K562 (cell line): ENCODE measurements at regions of chr20 and their contacts with region 1.

Region 1: GRCh38 chr20:34190679-34191090 is 50.5 kb upstream of the ASIP start:
- DNase-seq: peak; percentile 61 to 81 (median 72)
- ATAC-seq: peak; percentile 96
- H3K4me3 ChIP-seq: no peak overlapping the region
- H3K27ac ChIP-seq: no peak overlapping the region
- H3K4me1 ChIP-seq: peaks cover 5 to 12% of the 10 kb centered on the region in 2 experiments; a peak in 3 of 5 replicates
- H3K27me3 ChIP-seq: peaks cover 4 to 6% of the 10 kb centered on the region in 2 experiments; a peak in 1 of 5 replicates
- CTCF ChIP-seq: peak; percentile 79 to 95 (median 89)
- EP300 ChIP-seq: no peak
- POLR2A ChIP-seq: no peak
- RAD21 ChIP-seq: peak; percentile 83 to 91

Region 2: DNA sequence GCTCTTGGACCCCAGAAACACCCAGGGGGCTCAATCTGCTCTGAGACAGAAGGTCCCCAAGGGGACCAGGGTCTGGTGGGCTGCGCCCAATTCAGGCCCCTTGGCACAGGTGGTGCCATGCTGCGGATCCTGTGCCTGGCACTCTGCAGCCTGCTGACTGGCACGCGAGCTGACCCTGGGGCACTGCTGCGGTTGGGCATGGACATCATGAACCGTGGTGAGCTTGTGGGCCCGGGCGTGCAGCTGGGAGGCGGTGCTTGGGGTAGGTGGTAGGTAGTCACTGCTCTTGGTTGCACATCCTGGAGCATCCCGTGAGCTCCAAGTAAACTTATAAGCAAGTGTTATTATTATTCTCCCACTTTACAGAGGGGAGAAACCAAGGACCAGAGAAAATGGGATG is 1159.2 kb before region 1 on chr20 and contains the start of gene BPIFB6:
- CTCF ChIA-PET with region 1: no interaction called
- POLR2A ChIA-PET with region 1: no interaction called
- in situ Hi-C with region 1: no loop called
- intact Hi-C with region 1: no loop called
- DNase-seq: no peak
- ATAC-seq: no peak
- H3K4me3 ChIP-seq: no peak within 1 kb of the TSS
- H3K27ac ChIP-seq: no peak within 1 kb of the TSS
- H3K4me1 ChIP-seq: peaks cover 0 to 3% of the 10 kb centered on the region in 2 experiments; a peak in 1 of 5 replicates
- H3K27me3 ChIP-seq: peaks cover 0 to 31% of the 10 kb centered on the region in 2 experiments; a peak in 2 of 5 replicates
- CTCF ChIP-seq: no peak
- EP300 ChIP-seq: no peak
- POLR2A ChIP-seq: no peak
- RAD21 ChIP-seq: no peak
- polyA plus RNA-seq, gene BPIFB6: not detected

Region 3: DNA sequence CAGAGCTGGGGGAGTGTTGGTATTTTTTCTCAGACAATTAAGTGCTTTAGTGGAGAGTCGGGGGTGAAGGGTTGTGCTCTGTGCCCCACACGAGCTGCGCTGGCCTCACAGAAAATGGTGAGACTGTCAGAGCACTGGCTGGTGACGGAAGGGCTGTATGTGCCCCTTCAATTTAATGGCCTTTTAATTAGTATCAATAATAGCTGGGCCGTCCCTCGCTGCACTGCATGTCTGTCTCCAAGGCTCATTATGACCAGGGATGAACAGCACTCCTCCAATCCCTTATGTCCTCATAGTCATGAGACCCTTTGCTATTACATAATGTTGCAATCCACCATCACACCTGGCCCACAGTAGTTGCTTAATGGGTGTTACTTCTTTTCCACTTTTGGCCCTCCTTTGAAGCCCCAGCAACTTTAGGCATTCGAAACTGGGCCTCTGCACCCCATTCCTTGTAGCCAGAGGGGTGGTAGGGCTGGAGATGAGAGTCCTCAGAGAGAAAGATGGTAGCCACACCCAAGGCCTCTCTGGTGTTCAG is 206.4 kb before region 1 on chr20:
- CTCF ChIA-PET with region 1: no interaction called
- POLR2A ChIA-PET with region 1: no interaction called
- in situ Hi-C with region 1: no loop called
- intact Hi-C with region 1: no loop called
- DNase-seq: no peak
- ATAC-seq: no peak
- H3K4me3 ChIP-seq: no peak overlapping the region
- H3K27ac ChIP-seq: no peak overlapping the region
- H3K4me1 ChIP-seq: no peaks in the 10 kb centered on the region; a peak in 1 of 5 replicates
- H3K27me3 ChIP-seq: peaks cover 31 to 38% of the 10 kb centered on the region in 2 experiments
- CTCF ChIP-seq: no peak
- EP300 ChIP-seq: no peak
- POLR2A ChIP-seq: no peak
- RAD21 ChIP-seq: no peak

Region 4: GRCh38 chr20:34240693-34241615 is 50.3 kb after region 1 on chr20 and contains the start of gene ASIP:
- CTCF ChIA-PET with region 1: no interaction called
- POLR2A ChIA-PET with region 1: no interaction called
- in situ Hi-C with region 1: no loop called
- intact Hi-C with region 1: loop called (anchors 5 kb)
- DNase-seq: no peak
- ATAC-seq: no peak
- H3K4me3 ChIP-seq: no peak within 1 kb of the TSS
- H3K27ac ChIP-seq: no peak within 1 kb of the TSS
- H3K4me1 ChIP-seq: no peaks in the 10 kb centered on the region
- H3K27me3 ChIP-seq: 0 out of 5 replicates have a peak, but pooled peaks cover 0 to 3% of the 10 kb centered on the region in 2 experiments
- CTCF ChIP-seq: no peak
- EP300 ChIP-seq: no peak
- POLR2A ChIP-seq: no peak
- RAD21 ChIP-seq: no peak
- polyA plus RNA-seq, gene ASIP: not detected

Region 5: GRCh38 chr20:34254979-34255378 is 64.3 kb after region 1 on chr20:
- CTCF ChIA-PET with region 1: no interaction called
- POLR2A ChIA-PET with region 1: no interaction called
- in situ Hi-C with region 1: no loop called
- intact Hi-C with region 1: no loop called
- DNase-seq: no peak
- ATAC-seq: no peak
- H3K4me3 ChIP-seq: no peak overlapping the region
- H3K27ac ChIP-seq: no peak overlapping the region; the same call in 2 of the 3 replicates
- H3K4me1 ChIP-seq: peaks cover 0 to 13% of the 10 kb centered on the region in 2 experiments; a peak in 3 of 5 replicates
- H3K27me3 ChIP-seq: no peaks in the 10 kb centered on the region
- CTCF ChIP-seq: no peak
- EP300 ChIP-seq: no peak
- POLR2A ChIP-seq: no peak
- RAD21 ChIP-seq: no peak

Region 6: GRCh38 chr20:34312544-34313217 is 122.0 kb after region 1 on chr20:
- CTCF ChIA-PET with region 1: interaction called, 6 read pairs
- POLR2A ChIA-PET with region 1: no interaction called
- in situ Hi-C with region 1: no loop called
- intact Hi-C with region 1: loop called (anchors 2 kb)
- DNase-seq: peak; percentile 83 to 93 (median 84)
- ATAC-seq: peak; percentile 99
- H3K4me3 ChIP-seq: peak overlapping the region; percentile 14
- H3K27ac ChIP-seq: no peak overlapping the region
- H3K4me1 ChIP-seq: peaks cover 13 to 20% of the 10 kb centered on the region in 2 experiments; a peak in 4 of 5 replicates
- H3K27me3 ChIP-seq: no peaks in the 10 kb centered on the region
- CTCF ChIP-seq: peak; percentile 100
- EP300 ChIP-seq: no peak
- POLR2A ChIP-seq: no peak
- RAD21 ChIP-seq: peak; percentile 100

Region 7: DNA sequence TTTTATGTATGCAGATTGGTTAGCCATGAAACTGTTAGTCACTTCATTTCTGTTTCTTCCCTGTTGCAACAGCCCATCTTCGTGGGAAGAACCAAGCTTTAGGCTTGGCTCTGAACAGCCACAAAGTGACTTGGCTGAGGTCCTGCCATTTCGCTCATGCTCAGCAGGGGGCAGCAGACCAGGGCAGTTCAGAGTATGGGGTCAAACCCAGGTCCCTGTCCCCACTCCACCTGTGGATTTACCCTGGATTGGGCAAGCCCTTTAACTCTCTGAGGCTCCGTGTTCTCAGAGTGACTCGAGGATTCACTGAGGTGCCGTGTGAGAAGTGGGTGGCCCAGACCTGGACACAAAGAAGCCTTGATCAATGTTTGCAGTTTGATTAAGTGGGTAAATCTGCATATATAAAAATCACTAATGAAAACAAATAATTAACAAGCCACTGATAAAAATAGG is 348.0 kb after region 1 on chr20:
- CTCF ChIA-PET with region 1: no interaction called
- POLR2A ChIA-PET with region 1: no interaction called
- in situ Hi-C with region 1: no loop called
- intact Hi-C with region 1: loop called (anchors 5 kb)
- DNase-seq: peak; percentile 69 to 84 (median 76)
- ATAC-seq: peak; percentile 91
- H3K4me3 ChIP-seq: no peak overlapping the region
- H3K27ac ChIP-seq: no peak overlapping the region
- H3K4me1 ChIP-seq: peaks cover 0 to 3% of the 10 kb centered on the region in 2 experiments; a peak in 1 of 5 replicates
- H3K27me3 ChIP-seq: no peaks in the 10 kb centered on the region
- CTCF ChIP-seq: peak; percentile 82 to 91 (median 85)
- EP300 ChIP-seq: 0 out of 2 replicates have a peak, but pooled peaks have one; percentile 19
- POLR2A ChIP-seq: no peak
- RAD21 ChIP-seq: peak; percentile 55 to 85